T-cell (primary cell): ENCODE measurements at regions of chr7 and their contacts with region 1.

Region 1: GRCh38 chr7:36198854-36199266 is 45.8 kb downstream of the EEPD1 start:
- DNase-seq: no peak
- ATAC-seq: no peak
- H3K4me3 ChIP-seq: no peak overlapping the region
- H3K4me3 Mint-ChIP-seq: no peak overlapping the region
- H3K27ac ChIP-seq: no peak overlapping the region
- H3K27ac Mint-ChIP-seq: peak overlapping the region in 1 of 2 donors; percentile 70
- H3K4me1 ChIP-seq: peaks cover 11 to 18% of the 10 kb centered on the region in 2 experiments
- H3K4me1 Mint-ChIP-seq: peaks cover 20 to 40% (median 35%) of the 10 kb centered on the region in 3 donors
- H3K27me3 ChIP-seq: no peaks in the 10 kb centered on the region
- H3K27me3 Mint-ChIP-seq: no peaks in the 10 kb centered on the region

Region 2: DNA sequence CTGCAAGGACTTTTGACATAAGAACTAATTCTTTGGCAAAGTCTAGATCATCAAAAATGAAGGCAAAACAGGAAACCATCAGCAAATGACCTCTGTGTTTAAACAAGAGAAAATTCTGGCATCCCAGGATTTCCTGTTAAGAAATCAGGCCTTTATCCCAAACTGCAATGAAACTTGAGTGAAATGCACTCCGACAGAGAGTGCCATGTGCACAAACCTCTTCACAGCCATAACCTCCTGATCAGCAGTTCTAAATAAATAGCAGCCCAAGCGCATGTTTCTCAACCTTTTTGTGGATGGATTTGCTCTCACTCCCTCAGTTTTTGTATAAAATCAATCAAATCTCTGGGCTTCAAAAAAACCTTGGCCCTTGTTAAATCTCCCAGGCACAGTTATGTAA is 153.5 kb before region 1 on chr7:
- CTCF ChIA-PET with region 1: no interaction called
- POLR2A ChIA-PET with region 1: interaction called in 1 of 2 experiments, 11 read pairs
- DNase-seq: no peak
- ATAC-seq: no peak
- H3K4me3 ChIP-seq: no peak overlapping the region
- H3K4me3 Mint-ChIP-seq: no peak overlapping the region
- H3K27ac ChIP-seq: no peak overlapping the region
- H3K27ac Mint-ChIP-seq: no peak overlapping the region
- H3K4me1 ChIP-seq: no peaks in the 10 kb centered on the region
- H3K4me1 Mint-ChIP-seq: no peaks in the 10 kb centered on the region
- H3K27me3 ChIP-seq: no peaks in the 10 kb centered on the region
- H3K27me3 Mint-ChIP-seq: peaks cover 0 to 2% of the 10 kb centered on the region in 2 donors

Region 3: GRCh38 chr7:36291387-36292316 is 92.8 kb after region 1 on chr7:
- CTCF ChIA-PET with region 1: no interaction called
- POLR2A ChIA-PET with region 1: interaction called in 1 of 2 experiments, 10 read pairs
- DNase-seq: peak; percentile 14 to 87 (median 62)
- ATAC-seq: peak; percentile 39 to 53 (median 44)
- H3K4me3 ChIP-seq: peak overlapping the region in 1 of 2 donors; percentile 53
- H3K4me3 Mint-ChIP-seq: peak overlapping the region; percentile 60 to 69 (median 68)
- H3K27ac ChIP-seq: no peak overlapping the region
- H3K27ac Mint-ChIP-seq: peak overlapping the region in 1 of 2 donors; percentile 62
- H3K4me1 ChIP-seq: peaks cover 19 to 38% of the 10 kb centered on the region in 2 experiments
- H3K4me1 Mint-ChIP-seq: peaks cover 38 to 49% (median 46%) of the 10 kb centered on the region in 3 donors
- H3K27me3 ChIP-seq: no peaks in the 10 kb centered on the region
- H3K27me3 Mint-ChIP-seq: no peaks in the 10 kb centered on the region